RWPE1 (cell line): ENCODE measurements at regions of chr2 and their contacts with region 1.

Region 1: DNA sequence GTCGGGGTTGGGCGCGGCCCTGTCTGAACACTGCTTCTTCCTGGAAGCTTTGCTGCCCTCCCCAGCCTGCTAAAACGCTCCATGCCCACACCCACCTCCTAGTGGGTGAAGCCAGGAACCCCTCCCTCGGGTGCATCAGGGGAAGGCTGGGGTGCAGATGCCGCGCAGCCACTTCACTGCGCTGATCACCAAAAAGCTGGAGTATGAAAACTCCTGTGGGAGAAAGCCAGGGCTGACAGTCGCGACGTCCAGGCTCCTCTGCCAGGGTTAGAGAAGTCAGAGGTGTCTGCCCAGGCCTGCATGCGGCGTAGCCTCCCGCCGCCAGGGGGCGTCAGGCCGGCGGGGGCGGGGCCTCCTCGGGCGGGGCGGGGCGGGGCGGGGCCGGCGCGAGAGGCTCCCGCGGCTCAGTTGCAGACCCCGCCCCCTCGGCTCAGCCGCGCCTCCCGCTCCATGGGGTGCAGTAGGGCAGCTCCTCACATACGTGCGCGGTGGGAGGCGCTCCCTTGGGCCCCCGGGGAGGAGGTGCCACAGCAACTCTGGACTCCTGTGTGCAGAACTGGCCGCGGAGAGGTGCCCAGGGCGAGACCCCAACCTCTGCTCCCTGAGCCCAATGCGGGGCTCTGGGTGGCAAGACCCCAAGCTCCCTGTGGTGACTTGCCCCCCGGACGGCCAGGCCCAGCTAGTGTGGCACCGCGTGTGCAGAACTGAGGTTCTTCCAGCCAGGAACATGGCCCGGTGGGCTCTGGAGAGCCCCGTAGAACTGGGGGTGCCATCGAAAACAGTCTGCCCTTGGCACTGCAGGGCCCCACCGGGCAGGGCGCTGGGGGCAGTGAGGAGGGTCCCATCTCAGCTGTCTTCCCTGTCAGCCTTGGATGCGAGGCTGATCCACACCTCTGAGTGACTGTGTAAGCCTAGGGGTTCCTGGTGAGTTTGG is 1.8 kb upstream of the RNPEPL1 start:
- DNase-seq: peak; percentile 78
- H3K27ac ChIP-seq: peak overlapping the region; percentile 98
- CTCF ChIP-seq: peak; percentile 94

Region 2: DNA sequence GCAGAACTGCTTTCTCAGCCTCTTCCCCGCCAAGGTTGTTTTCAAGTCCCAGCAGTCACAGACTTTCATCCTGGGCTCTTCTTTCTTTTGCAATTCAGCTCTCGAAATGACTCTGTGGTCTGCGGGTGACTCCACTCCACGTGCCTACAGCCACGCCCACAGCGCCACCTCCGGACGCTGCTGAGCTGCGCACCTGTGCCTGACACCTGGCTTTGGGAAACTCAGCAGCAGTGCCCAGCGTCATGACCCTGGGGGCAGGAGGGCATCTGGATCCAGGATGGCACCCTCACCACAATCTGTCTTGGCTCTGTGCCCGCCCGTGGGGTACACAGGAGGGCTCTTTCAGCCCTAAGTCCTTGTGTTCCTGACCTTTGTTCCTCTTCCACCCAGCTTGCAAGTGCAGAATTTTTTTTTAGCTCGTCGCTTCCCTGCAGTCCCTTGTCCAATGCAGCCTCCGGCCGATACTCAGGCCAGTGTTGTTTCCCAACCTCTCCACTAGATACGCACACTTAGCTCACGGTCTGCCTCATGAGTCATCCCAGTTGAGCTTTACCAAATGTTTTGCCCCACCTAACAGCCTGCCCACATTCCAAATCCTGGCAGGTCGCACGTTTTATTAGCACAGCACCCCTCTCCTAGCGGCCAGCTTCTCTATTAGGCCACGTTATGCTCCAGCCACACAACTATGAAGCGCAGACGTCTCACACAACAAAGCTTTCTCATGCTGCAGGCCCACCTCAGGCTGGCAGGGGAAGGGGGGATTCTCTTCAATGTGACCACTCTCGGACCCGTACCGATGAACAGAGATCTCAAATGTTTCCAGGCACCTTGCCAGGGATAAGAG is 13.5 kb after region 1 on chr2:
- CTCF ChIA-PET with region 1: interaction called, 16 read pairs
- POLR2A ChIA-PET with region 1: interaction called, 12 read pairs
- DNase-seq: peak; percentile 78
- H3K27ac ChIP-seq: peak overlapping the region; percentile 98
- CTCF ChIP-seq: peak; percentile 51

Region 3: DNA sequence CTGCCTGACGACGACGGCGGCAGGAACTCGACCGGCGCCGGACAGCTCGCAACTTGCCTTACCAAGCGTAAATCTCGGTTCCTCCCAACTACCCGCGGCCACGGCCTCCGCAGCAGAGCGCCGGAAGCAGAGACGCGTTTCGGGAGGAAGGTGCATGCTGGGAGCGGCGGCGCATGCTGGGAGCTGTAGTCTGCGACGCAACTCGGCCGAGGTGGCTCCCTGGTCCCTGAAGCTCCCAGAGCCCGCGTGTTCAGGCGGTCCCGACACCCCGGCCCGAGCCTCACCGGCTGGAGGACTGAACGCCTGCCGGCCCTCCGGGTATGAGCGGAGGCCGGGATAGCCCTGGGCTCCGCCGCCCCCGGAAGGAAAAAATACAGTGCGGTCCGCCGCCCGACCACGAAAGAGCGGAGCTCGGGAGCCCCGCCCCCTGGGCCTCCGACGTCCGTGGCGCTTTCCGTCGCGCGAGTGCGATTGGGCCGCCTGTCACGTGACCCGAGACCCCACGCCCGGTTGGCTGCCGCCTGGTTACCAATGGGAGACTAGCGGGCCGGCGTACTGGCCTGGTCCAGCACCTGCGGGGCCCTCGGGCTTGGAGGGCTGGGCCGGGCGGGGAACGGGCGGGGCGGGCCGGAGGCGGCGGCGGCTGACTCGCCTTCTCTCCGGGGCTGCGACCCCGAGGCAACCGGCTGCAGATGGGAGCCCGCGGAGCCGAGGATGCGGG is 19.9 kb after region 1 on chr2 and contains the start of gene CAPN10:
- CTCF ChIA-PET with region 1: interaction called, 5 read pairs
- POLR2A ChIA-PET with region 1: interaction called, 12 read pairs
- DNase-seq: peak; percentile 96
- H3K27ac ChIP-seq: peak within 1 kb of the TSS; percentile 89
- CTCF ChIP-seq: no peak

Region 4: GRCh38 chr2:240596491-240596931 is 30.0 kb after region 1 on chr2:
- CTCF ChIA-PET with region 1: no interaction called
- POLR2A ChIA-PET with region 1: no interaction called
- DNase-seq: no peak
- H3K27ac ChIP-seq: no peak overlapping the region
- CTCF ChIP-seq: no peak